PC-3 (cell line): ENCODE measurements at regions of chr19 and their contacts with region 1.

Region 1: GRCh38 chr19:8389891-8390616 is at the start of gene RAB11B:
- DNase-seq: peak; percentile 100
- ATAC-seq: peak; percentile 93
- H3K4me3 ChIP-seq: peak within 1 kb of the TSS; percentile 89
- H3K27ac ChIP-seq: peak within 1 kb of the TSS; percentile 94
- H3K4me1 ChIP-seq: peaks cover 39% of the 10 kb centered on the region
- H3K27me3 ChIP-seq: no peaks in the 10 kb centered on the region
- CTCF ChIP-seq: no peak
- total RNA-seq, gene RAB11B: 29.7 and 43.6 TPM in 2 replicates

Region 2: DNA sequence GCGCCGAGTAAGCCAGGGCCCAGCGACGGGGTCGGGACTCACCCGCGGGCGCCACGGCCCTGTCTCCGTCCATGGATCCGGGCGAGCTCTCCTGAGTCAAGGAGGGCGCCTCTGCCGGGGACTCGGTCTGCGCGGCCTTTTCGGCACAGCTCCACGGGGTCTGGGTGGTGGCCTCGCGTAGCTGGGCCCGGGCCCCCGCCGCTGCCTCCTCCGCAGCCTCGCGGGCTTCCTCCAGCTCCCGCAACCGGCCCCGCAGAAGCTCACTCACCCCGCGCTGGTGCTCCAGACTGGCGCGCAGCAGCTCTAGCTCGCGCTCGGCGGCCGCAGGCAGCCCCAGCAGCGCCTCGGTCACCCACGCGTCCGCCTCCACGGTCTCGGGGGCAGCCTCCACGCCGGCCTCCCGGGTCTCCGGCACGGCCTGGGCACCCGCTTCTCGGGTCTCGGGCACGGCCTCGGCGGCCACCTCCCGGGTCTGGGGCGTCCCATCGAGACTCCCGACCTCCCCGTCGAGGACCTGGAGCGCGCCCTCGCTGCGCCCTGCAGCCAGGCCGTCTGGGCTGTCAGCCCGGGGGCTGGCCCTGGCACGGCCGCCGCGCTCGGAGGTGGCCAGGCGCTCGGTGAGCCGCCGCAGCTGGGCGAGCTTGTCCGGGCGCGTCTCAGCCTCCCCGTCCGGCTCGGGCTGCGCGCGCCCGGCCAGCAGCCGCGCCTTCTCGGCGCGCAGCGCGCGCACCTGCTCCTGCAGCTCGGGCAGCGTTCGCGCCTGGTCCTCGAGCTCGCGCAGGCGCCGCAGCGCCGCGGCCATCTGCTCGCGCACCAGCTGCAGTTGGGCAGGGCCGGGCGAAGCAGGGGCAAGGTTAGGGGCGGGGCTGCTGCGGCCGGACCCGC is 55.4 kb before region 1 on chr19:
- CTCF ChIA-PET with region 1: interaction called, 12 read pairs
- POLR2A ChIA-PET with region 1: no interaction called
- intact Hi-C with region 1: no loop called
- DNase-seq: peak; percentile 87
- ATAC-seq: peak; percentile 70
- H3K4me3 ChIP-seq: peak overlapping the region; percentile 66
- H3K27ac ChIP-seq: no peak overlapping the region
- H3K4me1 ChIP-seq: peaks cover 11% of the 10 kb centered on the region; the same call in 1 of the 2 replicates
- H3K27me3 ChIP-seq: peaks cover 22% of the 10 kb centered on the region
- CTCF ChIP-seq: no peak

Region 3: GRCh38 chr19:8355631-8356402 is 34.2 kb before region 1 on chr19:
- CTCF ChIA-PET with region 1: interaction called, 7 read pairs
- POLR2A ChIA-PET with region 1: interaction called, 22 read pairs
- intact Hi-C with region 1: loop called (anchors 2 kb)
- DNase-seq: peak; percentile 97
- ATAC-seq: peak; percentile 93
- H3K4me3 ChIP-seq: no peak overlapping the region
- H3K27ac ChIP-seq: peak overlapping the region; percentile 50
- H3K4me1 ChIP-seq: peaks cover 21% of the 10 kb centered on the region
- H3K27me3 ChIP-seq: no peaks in the 10 kb centered on the region
- CTCF ChIP-seq: 0 out of 2 replicates have a peak, but pooled peaks have one; percentile 19

Region 4: GRCh38 chr19:8363803-8364771 is 26.0 kb before region 1 on chr19 and contains the start of gene ANGPTL4:
- CTCF ChIA-PET with region 1: interaction called, 3 read pairs
- POLR2A ChIA-PET with region 1: interaction called, 7 read pairs
- intact Hi-C with region 1: loop called (anchors 1 kb)
- DNase-seq: peak; percentile 79
- ATAC-seq: peak; percentile 52
- H3K4me3 ChIP-seq: peak within 1 kb of the TSS; percentile 84
- H3K27ac ChIP-seq: peak within 1 kb of the TSS; percentile 35
- H3K4me1 ChIP-seq: peaks cover 40% of the 10 kb centered on the region
- H3K27me3 ChIP-seq: no peaks in the 10 kb centered on the region
- CTCF ChIP-seq: peak; percentile 44
- total RNA-seq, gene ANGPTL4: 6.7 and 10.7 TPM in 2 replicates

Region 5: GRCh38 chr19:8430650-8431049 is 40.6 kb after region 1 on chr19:
- CTCF ChIA-PET with region 1: no interaction called
- POLR2A ChIA-PET with region 1: no interaction called
- intact Hi-C with region 1: no loop called
- DNase-seq: no peak
- ATAC-seq: no peak
- H3K4me3 ChIP-seq: no peak overlapping the region
- H3K27ac ChIP-seq: no peak overlapping the region
- H3K4me1 ChIP-seq: no peaks in the 10 kb centered on the region
- H3K27me3 ChIP-seq: no peaks in the 10 kb centered on the region
- CTCF ChIP-seq: no peak